ENCODE measurements at regions of chr13 and their contacts with region 1.

Region 1: DNA sequence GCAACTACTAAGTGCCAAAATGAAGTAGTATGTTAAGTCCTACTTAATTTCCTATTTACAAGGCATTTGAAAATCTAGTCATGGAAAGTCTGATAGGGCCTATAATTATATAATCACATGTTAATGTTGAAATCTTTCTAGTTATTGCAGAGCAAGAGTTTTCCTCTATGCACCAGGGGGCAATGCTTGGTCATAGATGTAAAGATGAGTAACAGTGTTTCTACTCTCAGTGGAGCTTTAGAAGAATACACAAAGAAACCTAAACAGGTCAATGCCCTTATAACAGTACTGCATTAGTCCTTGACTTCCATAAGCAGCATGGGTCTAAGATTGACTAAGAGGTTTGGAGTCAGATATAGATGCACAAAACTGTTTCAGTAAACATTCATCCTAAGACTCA is 218.7 kb downstream of the KCTD12 start:
- DNase-seq: peak; percentile 27
- ATAC-seq: peak; percentile 57
- H3K4me3 ChIP-seq: no peak overlapping the region
- H3K27ac ChIP-seq: no peak overlapping the region
- H3K4me1 ChIP-seq: no peaks in the 10 kb centered on the region
- H3K27me3 ChIP-seq: peaks cover 21% of the 10 kb centered on the region
- CTCF ChIP-seq: peak; percentile 53

Region 2: DNA sequence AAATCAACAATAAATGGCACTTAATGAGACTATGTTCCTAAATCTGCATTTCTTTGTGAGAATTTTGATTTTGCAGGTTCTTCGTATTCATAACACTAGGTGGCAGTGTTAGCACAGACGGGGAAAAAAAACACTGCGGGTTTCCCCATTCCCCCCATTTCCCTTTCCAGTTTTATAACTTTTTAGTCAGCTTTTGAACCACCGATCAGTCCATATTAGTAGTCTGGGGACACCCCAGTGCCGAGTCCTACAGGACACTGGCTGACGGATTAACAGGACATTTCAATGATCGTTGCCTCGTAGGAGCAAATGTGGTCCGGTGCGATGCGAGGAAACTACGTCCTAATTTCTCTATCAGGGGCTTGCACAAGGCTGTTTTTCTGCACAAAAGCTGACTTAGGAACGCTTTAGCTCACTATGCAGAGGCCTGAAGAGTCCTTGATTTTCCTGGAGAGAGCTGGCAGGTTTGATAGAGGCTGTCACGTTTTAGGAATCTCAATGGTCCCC is 797.1 kb before region 1 on chr13:
- CTCF ChIA-PET with region 1: no interaction called
- POLR2A ChIA-PET with region 1: no interaction called
- intact Hi-C with region 1: loop called (anchors 5 kb)
- DNase-seq: peak; percentile 56
- ATAC-seq: peak; percentile 30
- H3K4me3 ChIP-seq: peak overlapping the region; percentile 84
- H3K27ac ChIP-seq: no peak overlapping the region
- H3K4me1 ChIP-seq: peaks cover 6% of the 10 kb centered on the region
- H3K27me3 ChIP-seq: no peaks in the 10 kb centered on the region
- CTCF ChIP-seq: peak; percentile 82

Region 3: GRCh38 chr13:76799696-76800095 is 132.1 kb after region 1 on chr13:
- CTCF ChIA-PET with region 1: no interaction called
- POLR2A ChIA-PET with region 1: no interaction called
- intact Hi-C with region 1: loop called (anchors 5 kb)
- DNase-seq: peak; percentile 32
- ATAC-seq: peak; percentile 45; the same call in 1 of the 2 replicates
- H3K4me3 ChIP-seq: no peak overlapping the region
- H3K27ac ChIP-seq: no peak overlapping the region
- H3K4me1 ChIP-seq: peaks cover 14% of the 10 kb centered on the region; the same call in 1 of the 2 replicates
- H3K27me3 ChIP-seq: no peaks in the 10 kb centered on the region
- CTCF ChIP-seq: no peak

Region 4: GRCh38 chr13:76980075-76980718 is 312.6 kb after region 1 on chr13:
- CTCF ChIA-PET with region 1: interaction called, 3 read pairs
- POLR2A ChIA-PET with region 1: no interaction called
- intact Hi-C with region 1: loop called (anchors 2 kb)
- DNase-seq: peak; percentile 71
- ATAC-seq: peak; percentile 99
- H3K4me3 ChIP-seq: peak overlapping the region; percentile 59
- H3K27ac ChIP-seq: no peak overlapping the region
- H3K4me1 ChIP-seq: no peaks in the 10 kb centered on the region
- H3K27me3 ChIP-seq: no peaks in the 10 kb centered on the region
- CTCF ChIP-seq: peak; percentile 84

Measured in PC-3 (cell line).